ENCODE measurements at regions of chr1 and their contacts with region 1.

Region 1: GRCh38 chr1:84690397-84691121 is at the start of gene SSX2IP:
- DNase-seq: peak; percentile 99
- ATAC-seq: peak; percentile 89
- H3K4me3 Mint-ChIP-seq: peak within 1 kb of the TSS; percentile 91
- H3K27ac Mint-ChIP-seq: peak within 1 kb of the TSS; percentile 85
- H3K4me1 Mint-ChIP-seq: peaks cover 57% of the 10 kb centered on the region
- H3K27me3 Mint-ChIP-seq: no peaks in the 10 kb centered on the region
- total RNA-seq, gene SSX2IP: 10.3 to 12.3 TPM

Region 2: DNA sequence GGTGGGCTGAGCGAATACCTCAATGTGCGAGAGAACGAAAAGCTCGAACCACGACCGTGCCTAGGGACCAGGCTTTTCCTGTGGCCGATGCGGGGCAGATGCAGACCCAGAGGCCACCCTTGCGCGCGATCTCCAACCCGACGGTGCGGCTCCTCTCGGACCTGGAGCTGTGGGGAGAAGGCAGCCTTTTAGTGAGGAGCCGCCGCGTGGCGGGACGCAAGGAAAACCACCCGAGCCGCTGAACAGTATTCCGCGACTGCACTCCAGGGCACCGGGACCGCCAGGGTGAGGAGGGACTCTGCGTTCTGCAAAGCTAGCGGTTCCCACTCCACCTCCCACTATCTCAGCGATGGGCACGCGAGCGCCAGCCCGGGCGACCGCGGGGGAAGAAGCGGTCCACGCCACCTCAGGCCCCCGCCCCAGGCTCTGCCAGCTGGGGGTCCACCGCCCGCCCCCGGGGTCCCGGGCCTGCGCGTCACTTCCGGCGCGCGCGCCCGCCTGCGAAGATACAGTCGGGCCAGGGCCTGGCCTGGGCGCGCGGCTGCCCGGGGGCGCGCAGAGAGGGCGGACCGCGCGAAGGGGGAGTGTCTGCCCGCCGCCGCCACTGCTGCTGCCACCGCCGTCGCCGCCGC is 613.0 kb before region 1 on chr1:
- CTCF ChIA-PET with region 1: no interaction called
- POLR2A ChIA-PET with region 1: no interaction called
- intact Hi-C with region 1: loop called in 1 of 2 experiments (anchors 5 kb)
- DNase-seq: peak; percentile 85
- ATAC-seq: peak; percentile 94
- H3K4me3 Mint-ChIP-seq: peak overlapping the region; percentile 79
- H3K27ac Mint-ChIP-seq: peak overlapping the region; percentile 58
- H3K4me1 Mint-ChIP-seq: peaks cover 6% of the 10 kb centered on the region
- H3K27me3 Mint-ChIP-seq: peaks cover 2% of the 10 kb centered on the region

Region 3: DNA sequence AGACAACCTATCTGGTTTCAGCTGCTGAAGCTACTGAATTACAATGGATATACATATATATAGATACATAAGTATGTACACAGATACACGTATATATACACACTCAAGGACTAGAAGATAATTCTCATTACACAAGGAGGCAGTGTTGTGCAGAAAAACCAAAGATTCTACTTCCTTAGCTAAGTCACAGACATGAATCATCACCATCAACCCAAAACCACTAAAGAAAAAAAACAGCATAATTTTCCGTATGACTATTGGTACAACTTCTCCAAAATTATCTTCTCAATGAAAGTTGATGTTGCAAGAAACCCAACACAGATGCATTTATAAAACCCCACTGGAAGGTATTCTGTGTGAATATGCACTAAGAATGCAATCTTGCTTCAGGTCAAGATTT is 248.3 kb before region 1 on chr1:
- CTCF ChIA-PET with region 1: no interaction called
- POLR2A ChIA-PET with region 1: no interaction called
- intact Hi-C with region 1: loop called in 1 of 2 experiments (anchors 1 kb)
- DNase-seq: no peak
- ATAC-seq: peak; percentile 99
- H3K4me3 Mint-ChIP-seq: no peak overlapping the region
- H3K27ac Mint-ChIP-seq: no peak overlapping the region
- H3K4me1 Mint-ChIP-seq: peaks cover 23% of the 10 kb centered on the region
- H3K27me3 Mint-ChIP-seq: peaks cover 5% of the 10 kb centered on the region

Region 4: DNA sequence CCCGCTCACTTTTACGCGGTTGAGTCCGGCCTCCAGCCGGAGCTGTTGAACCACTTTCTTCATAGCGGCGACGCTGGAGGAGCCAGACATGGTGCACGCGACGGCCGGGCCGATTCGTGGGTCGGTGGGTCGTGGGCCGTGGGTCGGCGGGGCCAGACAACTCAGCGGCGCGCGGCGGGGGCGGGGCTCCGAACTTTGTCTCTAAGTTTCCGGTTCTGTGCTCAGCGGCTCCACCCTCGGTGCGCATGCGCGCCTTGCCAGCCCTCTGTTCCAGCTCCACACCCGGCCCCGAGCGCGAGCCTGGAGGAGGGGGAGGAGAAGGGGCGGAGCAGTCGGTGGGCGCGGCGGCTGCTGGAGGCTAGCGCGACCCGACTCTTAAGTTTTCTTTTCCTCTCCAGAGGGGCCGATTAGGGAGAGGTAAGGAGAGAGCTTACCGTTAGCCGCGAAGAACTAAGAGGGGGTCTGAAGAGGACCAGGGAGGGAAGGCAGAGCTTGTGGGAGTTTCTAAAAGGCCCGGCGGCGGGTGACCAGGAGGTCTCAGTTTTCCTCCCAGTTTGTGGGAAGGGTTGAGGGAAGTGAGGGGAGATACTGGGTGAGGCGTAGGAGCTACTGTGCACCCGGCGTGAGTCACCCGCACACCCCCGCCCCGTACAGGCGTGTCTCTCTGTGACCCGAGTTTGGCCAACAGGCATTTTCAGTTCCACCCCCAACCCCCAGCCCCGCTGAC is 184.4 kb before region 1 on chr1 and contains the starts of genes GNG5 and SPATA1:
- CTCF ChIA-PET with region 1: no interaction called
- POLR2A ChIA-PET with region 1: no interaction called
- intact Hi-C with region 1: loop called (anchors 1 kb)
- DNase-seq: peak; percentile 99
- ATAC-seq: peak; percentile 91
- H3K4me3 Mint-ChIP-seq: peak within 1 kb of the TSS; percentile 96
- H3K27ac Mint-ChIP-seq: peak within 1 kb of the TSS; percentile 100
- H3K4me1 Mint-ChIP-seq: peaks cover 29% of the 10 kb centered on the region
- H3K27me3 Mint-ChIP-seq: no peaks in the 10 kb centered on the region
- total RNA-seq, gene GNG5: 124 to 159 TPM
- total RNA-seq, gene SPATA1: 0.61 to 1.4 TPM

Region 5: GRCh38 chr1:84541679-84542078 is 148.9 kb before region 1 on chr1:
- CTCF ChIA-PET with region 1: no interaction called
- POLR2A ChIA-PET with region 1: no interaction called
- intact Hi-C with region 1: no loop called
- DNase-seq: no peak
- ATAC-seq: no peak
- H3K4me3 Mint-ChIP-seq: no peak overlapping the region
- H3K27ac Mint-ChIP-seq: no peak overlapping the region
- H3K4me1 Mint-ChIP-seq: peaks cover 7% of the 10 kb centered on the region
- H3K27me3 Mint-ChIP-seq: no peaks in the 10 kb centered on the region

Region 6: GRCh38 chr1:84620720-84621313 is 69.7 kb before region 1 on chr1:
- CTCF ChIA-PET with region 1: interaction called, 3 read pairs
- POLR2A ChIA-PET with region 1: interaction called, 3 read pairs
- intact Hi-C with region 1: loop called (anchors 1 to 5 kb)
- DNase-seq: peak; percentile 91
- ATAC-seq: peak; percentile 90
- H3K4me3 Mint-ChIP-seq: peak overlapping the region; percentile 80
- H3K27ac Mint-ChIP-seq: peak overlapping the region; percentile 91
- H3K4me1 Mint-ChIP-seq: peaks cover 20% of the 10 kb centered on the region
- H3K27me3 Mint-ChIP-seq: no peaks in the 10 kb centered on the region

Region 7: DNA sequence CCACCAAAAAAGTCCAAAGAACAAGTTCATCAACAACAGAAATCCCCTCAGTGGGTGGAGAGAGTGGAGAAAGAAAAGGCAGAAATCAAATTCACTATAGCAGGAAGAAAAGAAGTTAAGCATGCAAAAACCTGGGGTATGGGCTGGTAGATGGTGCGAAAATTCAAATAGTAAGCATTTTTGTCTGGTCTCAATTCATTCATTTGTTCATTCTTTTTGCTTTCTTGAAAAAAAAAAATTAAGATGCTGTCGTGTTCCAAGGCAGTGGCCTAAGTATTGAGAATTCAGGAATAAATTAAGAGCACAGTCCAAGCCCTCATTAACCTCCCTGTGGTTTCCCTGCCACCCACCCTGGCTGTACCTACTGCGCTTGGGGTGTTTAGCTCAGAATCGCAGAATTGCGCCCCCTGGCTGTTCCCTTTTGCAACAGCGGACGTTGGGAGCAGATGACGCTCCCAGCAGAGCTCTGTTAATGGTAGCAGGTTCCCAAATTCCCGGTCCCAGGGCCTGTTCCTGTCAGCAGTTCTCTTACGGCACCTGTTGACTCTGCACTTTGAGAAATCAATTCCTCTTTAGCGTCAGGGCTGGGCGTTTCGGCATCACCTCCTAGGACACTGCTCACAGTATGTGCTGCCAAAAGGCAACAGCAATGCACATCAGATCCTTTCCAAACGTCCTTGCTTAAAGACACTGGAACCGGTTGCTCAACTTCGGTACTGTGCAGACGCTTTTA is 33.7 kb after region 1 on chr1:
- CTCF ChIA-PET with region 1: interaction called, 17 read pairs
- POLR2A ChIA-PET with region 1: no interaction called
- intact Hi-C with region 1: loop called in 1 of 2 experiments (anchors 2 kb)
- DNase-seq: peak; percentile 74
- ATAC-seq: peak; percentile 64
- H3K4me3 Mint-ChIP-seq: no peak overlapping the region
- H3K27ac Mint-ChIP-seq: no peak overlapping the region
- H3K4me1 Mint-ChIP-seq: peaks cover 18% of the 10 kb centered on the region
- H3K27me3 Mint-ChIP-seq: no peaks in the 10 kb centered on the region

Region 8: GRCh38 chr1:84785271-84786036 is 94.9 kb after region 1 on chr1:
- CTCF ChIA-PET with region 1: no interaction called
- POLR2A ChIA-PET with region 1: no interaction called
- intact Hi-C with region 1: no loop called
- DNase-seq: no peak
- ATAC-seq: no peak
- H3K4me3 Mint-ChIP-seq: no peak overlapping the region
- H3K27ac Mint-ChIP-seq: no peak overlapping the region
- H3K4me1 Mint-ChIP-seq: peaks cover 13% of the 10 kb centered on the region
- H3K27me3 Mint-ChIP-seq: no peaks in the 10 kb centered on the region

Region 9: DNA sequence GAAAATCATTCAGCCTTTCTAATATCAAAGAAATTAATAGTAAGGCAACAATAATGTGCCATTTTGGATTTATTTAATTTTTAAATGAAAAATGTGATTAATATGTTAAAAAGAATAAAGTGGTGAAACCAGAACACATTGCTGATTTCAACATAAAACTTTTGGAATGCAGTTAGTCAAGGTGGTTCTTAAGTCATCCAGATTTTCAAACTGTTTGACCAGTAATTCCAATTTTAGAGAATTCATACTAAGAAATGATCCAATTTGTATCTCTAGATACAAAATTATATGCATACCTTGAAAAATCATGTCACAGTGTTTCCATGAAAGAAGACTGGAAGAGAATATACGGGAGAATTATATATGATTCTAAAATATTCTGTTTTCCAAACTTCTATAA is 411.9 kb after region 1 on chr1:
- CTCF ChIA-PET with region 1: no interaction called
- POLR2A ChIA-PET with region 1: no interaction called
- intact Hi-C with region 1: no loop called
- DNase-seq: no peak
- ATAC-seq: no peak
- H3K4me3 Mint-ChIP-seq: no peak overlapping the region
- H3K27ac Mint-ChIP-seq: no peak overlapping the region
- H3K4me1 Mint-ChIP-seq: no peaks in the 10 kb centered on the region
- H3K27me3 Mint-ChIP-seq: peaks cover 8% of the 10 kb centered on the region

Region 10: DNA sequence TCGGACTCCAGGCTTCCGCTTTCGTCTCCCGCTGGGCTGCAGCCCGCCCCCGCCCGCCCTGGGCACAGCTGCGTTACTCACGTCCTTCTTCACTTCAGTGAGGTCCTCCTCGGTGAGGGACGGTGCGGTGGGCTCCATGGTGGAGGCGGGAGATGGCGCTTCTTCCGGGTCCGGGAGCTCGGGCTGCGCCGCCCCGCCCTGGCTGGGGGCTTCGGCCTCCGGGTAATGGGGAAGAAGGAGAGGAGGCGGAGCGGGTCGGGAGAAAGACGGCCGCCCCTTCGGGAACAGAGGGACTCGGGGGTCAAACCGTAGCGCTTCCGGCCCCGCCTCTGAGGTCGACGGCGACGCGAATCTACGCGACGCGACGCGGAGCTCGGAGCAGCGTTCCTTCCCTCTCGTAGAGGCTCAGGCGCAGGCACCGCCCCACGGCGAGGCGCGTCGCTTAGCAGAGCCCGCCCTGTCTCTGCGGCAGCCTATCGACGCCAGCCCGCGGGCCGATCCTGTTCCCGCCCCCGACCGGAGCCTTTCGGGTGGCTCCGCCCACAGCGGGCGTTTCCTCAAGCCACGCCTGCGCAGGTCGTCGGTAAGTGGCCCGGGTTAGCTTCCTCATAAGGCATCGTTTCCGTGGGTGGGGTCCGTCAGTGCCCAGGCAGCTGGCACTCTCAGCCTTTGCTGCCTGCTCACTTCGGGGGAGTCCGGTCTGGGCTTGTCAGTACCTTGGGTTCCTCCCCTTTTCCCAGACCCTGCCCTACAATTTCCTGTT is 585.8 kb after region 1 on chr1 and contains the start of gene BCL10:
- CTCF ChIA-PET with region 1: no interaction called
- POLR2A ChIA-PET with region 1: no interaction called
- intact Hi-C with region 1: loop called (anchors 1 to 5 kb)
- DNase-seq: peak; percentile 99
- ATAC-seq: peak; percentile 97
- H3K4me3 Mint-ChIP-seq: peak within 1 kb of the TSS; percentile 84
- H3K27ac Mint-ChIP-seq: peak within 1 kb of the TSS; percentile 94
- H3K4me1 Mint-ChIP-seq: peaks cover 52% of the 10 kb centered on the region
- H3K27me3 Mint-ChIP-seq: peaks cover 4% of the 10 kb centered on the region
- total RNA-seq, gene BCL10: 28.3 to 28.8 TPM

Measured in activated CD4-positive, alpha-beta T cell treated with anti-CD3 and anti-CD28 coated beads for 36 hours (primary cell).